ENCODE measurements at regions of chr2 and their contacts with region 1.

Region 1: GRCh38 chr2:80969900-80970299 is 665.3 kb upstream of the LRRTM1 start:
- DNase-seq: no peak

Region 2: DNA sequence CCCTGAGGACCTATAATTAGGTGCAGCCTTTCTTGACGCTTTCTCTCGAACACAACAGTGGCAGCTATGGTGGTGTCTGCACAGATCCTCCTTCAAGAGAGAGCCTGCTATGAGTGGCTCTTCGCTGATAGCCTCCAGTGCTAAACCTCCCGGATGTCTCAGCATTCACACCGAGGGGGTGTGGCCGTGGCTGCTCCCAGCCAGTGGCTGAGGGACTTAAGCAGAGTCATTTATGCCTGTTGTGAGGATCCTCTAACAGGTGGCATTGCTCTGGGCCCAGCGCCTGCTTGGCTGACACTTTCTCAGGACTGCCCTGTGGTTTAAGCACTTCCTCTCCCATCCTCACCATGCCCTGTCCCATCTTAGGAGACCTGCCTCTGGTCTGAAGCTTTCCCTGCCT is 73.3 kb before region 1 on chr2:
- intact Hi-C with region 1: no loop called
- DNase-seq: peak in 2 of 10 donors; percentile 49 to 59

Region 3: GRCh38 chr2:80987466-80987865 is 17.6 kb after region 1 on chr2:
- intact Hi-C with region 1: loop called (anchors 1 kb)
- DNase-seq: no peak

Region 4: GRCh38 chr2:81213598-81213997 is 243.7 kb after region 1 on chr2:
- intact Hi-C with region 1: no loop called
- DNase-seq: no peak

Measured in posterior cingulate gyrus (tissue), 11 donors.